GM10248 (cell line): ENCODE measurements at regions of chr11 and their contacts with region 1.

Region 1: DNA sequence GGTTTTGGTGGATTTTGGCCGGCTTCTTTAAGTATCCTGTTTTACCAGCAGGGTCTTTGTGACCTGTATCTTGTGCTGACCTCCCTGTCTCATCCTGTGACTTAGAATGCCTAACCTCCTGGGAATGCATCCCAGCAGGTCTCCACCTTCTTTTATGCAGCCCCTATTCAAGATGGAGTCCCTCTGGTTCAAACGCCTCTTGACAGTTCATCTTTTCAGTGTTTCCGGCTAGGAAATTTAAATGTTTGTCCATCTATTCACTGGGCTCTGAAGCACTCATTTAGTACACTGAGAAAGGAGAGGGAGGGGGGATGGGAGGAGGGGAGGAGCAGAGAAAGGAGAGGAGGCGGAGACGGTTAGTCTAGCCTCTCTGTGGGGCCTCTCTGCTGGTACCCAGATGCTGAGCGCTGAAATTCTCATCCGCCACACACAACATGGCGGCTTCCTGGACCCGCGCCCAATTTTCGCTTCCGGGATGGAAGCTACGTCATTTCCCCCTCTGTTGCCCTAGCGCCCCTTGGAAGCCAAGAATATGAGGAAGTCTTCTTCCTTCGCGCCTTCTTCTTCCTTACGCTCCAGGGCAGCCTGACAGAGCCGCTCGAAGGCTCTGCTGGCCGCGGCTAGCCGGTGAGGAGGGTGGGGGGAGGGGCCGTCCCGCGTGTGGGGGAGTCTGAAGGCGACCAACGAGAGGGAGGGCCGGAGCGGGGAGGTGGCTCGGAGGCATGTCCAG is 69.0 kb upstream of the SYT13 start:
- DNase-seq: peak; percentile 70
- CTCF ChIP-seq: no peak

Region 2: DNA sequence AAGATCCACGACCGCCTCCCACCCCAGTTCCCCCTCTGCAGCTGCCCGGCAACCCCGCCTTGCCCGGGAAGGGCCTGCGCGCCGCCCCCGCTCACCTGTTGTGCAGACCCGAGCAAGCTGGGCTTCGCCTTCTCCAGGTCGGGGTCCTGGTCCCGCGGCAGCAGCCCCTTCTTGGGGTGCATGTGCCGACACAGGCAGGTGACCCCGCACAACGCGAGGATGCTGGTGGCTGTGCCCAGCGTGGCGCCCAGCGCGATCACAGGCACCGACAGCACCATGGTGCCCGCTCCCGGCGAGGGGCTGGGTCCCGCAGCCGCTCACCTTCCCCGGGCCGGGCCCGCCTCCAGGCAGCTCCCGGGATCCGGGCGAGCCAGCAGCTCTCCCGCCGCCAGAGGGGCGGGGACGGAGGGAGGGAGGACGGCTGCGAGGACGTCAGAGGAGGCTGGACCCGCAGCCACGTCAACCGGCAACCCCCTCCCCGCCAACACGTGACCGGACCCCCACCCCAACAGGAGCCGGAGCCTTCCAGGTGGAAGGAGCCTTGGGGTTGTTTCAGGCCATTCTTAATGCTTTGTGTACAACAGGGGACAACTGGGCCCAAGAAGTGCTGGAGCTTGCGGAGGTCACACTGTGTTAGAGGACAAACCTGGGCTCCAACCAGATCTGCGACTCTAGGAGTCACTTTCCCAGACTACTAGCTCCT is 69.1 kb before region 1 on chr11 and contains the start of gene SYT13:
- CTCF ChIA-PET with region 1: no interaction called
- POLR2A ChIA-PET with region 1: no interaction called
- DNase-seq: no peak
- CTCF ChIP-seq: no peak

Region 3: GRCh38 chr11:45339729-45340519 is 15.2 kb before region 1 on chr11:
- CTCF ChIA-PET with region 1: interaction called, 14 read pairs
- POLR2A ChIA-PET with region 1: no interaction called
- DNase-seq: peak; percentile 92
- CTCF ChIP-seq: peak; percentile 90

Region 4: GRCh38 chr11:45383224-45383623 is 28.1 kb after region 1 on chr11:
- CTCF ChIA-PET with region 1: no interaction called
- POLR2A ChIA-PET with region 1: no interaction called
- DNase-seq: no peak
- CTCF ChIP-seq: no peak